ENCODE measurements at regions of chr4 and their contacts with region 1.

Region 1: DNA sequence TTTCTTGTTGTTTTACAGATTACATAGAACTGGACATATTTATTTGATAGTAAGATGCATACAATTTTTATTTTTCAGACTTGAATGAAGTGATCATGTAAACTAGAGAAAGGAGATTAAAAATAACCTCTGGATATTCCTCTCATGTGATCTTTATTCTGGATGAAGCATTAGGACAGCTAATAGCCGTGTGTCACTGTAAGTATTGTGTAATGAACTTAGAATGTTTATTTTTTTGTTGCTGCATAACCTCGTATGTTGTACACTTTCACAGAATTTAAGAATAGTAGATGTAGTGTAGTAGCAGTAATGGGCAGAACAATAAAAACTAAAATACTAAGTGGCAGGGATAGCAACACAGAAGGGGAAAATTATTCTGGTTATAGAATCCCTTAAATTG is 2094.5 kb upstream of the TENM3 start:
- DNase-seq: no peak
- H3K4me3 ChIP-seq: no peak overlapping the region
- H3K27ac ChIP-seq: no peak overlapping the region
- H3K27me3 ChIP-seq: no peaks in the 10 kb centered on the region
- CTCF ChIP-seq: no peak

Region 2: DNA sequence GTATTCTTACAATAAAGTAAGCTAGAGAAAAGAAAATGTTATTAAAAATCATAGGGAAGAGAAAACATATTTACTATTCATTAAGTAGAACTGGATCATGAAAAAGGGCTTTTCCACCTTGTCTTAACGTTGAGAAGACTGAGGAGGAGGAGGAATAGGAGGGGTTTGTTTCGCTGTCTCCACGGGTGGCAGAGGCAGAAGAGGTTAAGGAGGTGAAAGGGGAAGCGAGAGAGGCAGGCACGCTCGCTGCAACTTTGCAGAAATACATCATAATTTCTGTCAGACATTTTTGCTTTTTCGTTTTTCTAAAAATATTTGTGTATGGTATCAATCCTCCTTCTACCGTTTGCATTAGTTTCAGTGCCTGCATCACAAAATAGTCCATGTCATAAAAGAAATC is 331.4 kb before region 1 on chr4:
- CTCF ChIA-PET with region 1: no interaction called
- POLR2A ChIA-PET with region 1: no interaction called
- DNase-seq: no peak
- H3K4me3 ChIP-seq: no peak overlapping the region
- H3K27ac ChIP-seq: no peak overlapping the region
- H3K27me3 ChIP-seq: no peaks in the 10 kb centered on the region
- CTCF ChIP-seq: no peak

Region 3: DNA sequence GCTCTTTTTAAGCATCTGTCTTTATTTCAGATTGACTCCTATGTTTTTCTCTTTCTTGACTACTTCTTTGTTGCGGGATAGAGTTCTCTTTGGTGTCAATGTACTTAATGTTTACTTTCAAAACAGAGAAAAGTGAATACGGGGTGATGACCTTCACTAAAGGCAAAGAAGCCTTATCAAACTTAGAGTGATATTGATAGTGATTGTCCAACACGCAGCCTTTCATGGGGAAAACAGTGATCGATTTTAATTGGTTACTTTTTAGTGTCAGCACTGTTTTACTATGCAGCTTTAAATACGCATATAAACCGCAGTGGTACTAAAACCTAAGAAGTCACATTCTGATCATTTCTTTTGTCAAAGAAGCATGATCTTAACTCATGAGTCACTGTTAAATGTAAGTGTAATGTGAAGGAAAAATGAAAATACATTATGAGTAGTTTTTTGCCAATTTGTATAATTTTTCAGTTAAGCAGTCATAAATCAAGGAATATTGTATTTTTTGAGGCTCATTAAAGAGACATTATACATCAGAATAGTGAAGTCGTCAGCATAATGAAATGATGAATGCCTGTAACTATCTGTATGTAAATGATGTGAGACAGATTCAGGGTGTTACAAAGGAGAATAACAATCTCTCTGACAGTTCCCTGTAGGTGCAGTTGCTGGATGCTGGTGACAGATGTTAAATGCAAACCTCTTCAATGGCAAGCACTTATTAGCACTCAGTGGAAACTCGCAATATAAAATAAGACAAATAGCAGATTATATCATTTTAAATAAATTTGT is 11.7 kb after region 1 on chr4:
- CTCF ChIA-PET with region 1: interaction called, 6 read pairs
- POLR2A ChIA-PET with region 1: interaction called, 12 read pairs
- DNase-seq: no peak
- H3K4me3 ChIP-seq: no peak overlapping the region
- H3K27ac ChIP-seq: no peak overlapping the region
- H3K27me3 ChIP-seq: no peaks in the 10 kb centered on the region
- CTCF ChIP-seq: no peak

Region 4: GRCh38 chr4:180587379-180587778 is 438.6 kb after region 1 on chr4:
- CTCF ChIA-PET with region 1: no interaction called
- POLR2A ChIA-PET with region 1: no interaction called
- DNase-seq: no peak
- H3K4me3 ChIP-seq: no peak overlapping the region
- H3K27ac ChIP-seq: no peak overlapping the region
- H3K27me3 ChIP-seq: no peaks in the 10 kb centered on the region
- CTCF ChIP-seq: no peak